ENCODE measurements at regions of chr7 and their contacts with region 1.

Region 1: GRCh38 chr7:76997381-76997780 is 34.8 kb downstream of the SPDYE17 start:
- DNase-seq: peak in 1 of 9 experiments; percentile 22
- ATAC-seq: peak; percentile 12
- H3K4me3 ChIP-seq: peak overlapping the region in 1 of 2 experiments; percentile 4
- H3K4me3 Mint-ChIP-seq: no peak overlapping the region
- H3K27ac ChIP-seq: peak overlapping the region; percentile 45 to 63
- H3K27ac Mint-ChIP-seq: no peak overlapping the region
- H3K4me1 ChIP-seq: peaks cover 22% of the 10 kb centered on the region
- H3K4me1 Mint-ChIP-seq: peaks cover 3% of the 10 kb centered on the region
- H3K27me3 ChIP-seq: no peaks in the 10 kb centered on the region
- H3K27me3 Mint-ChIP-seq: no peaks in the 10 kb centered on the region
- CTCF ChIP-seq: no peak

Region 2: DNA sequence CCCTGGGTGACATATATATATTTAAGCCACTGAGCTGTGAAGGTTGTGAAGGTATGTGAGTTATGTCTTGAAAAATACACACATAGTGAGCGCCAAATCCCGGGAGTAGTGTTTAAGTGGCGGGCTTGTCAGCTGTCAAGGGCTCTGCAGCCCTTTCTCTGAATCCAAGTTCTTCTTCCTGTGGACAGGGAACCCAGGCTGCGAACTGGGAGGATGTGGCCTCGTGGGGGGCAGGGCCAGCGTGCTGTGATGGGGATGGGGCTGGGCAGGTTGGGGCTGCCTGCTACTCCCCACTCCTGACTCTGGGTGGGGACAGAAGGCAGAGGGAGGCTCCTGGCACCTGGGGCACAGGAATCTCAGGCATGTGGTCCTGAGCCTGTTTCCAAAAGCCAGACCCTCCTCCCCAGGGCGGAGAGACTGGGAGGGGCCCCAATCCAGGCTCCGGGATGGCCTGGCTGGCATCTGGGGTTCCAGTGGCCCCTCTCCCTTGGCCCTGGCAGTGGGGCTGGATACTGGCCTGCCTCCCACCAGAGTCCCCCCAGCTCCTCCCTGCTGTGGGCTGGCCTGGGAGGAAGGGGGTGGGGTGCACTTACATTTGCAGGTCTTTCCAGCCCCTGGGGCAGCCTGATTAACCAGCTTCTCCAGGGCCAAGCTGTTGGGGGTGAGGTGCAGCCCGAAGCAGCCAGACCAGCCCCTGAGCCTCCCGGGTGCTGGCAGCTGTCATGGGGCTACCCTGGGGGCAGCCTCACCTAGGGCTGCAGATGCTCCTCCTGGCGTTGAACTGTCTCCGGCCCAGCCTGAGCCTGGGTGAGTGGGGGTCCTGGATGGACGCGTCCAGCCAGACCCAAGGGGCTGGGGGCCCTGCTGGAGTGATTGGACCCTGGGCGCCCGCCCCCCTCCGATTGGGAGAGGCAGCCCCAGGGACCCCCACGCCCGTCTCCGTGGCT is 487.2 kb before region 1 on chr7 and contains the start of gene UPK3B:
- CTCF ChIA-PET with region 1: no interaction called
- POLR2A ChIA-PET with region 1: no interaction called
- intact Hi-C with region 1: loop called in 1 of 2 experiments (anchors 10 kb)
- DNase-seq: no peak
- ATAC-seq: no peak
- H3K4me3 ChIP-seq: no peak within 1 kb of the TSS
- H3K4me3 Mint-ChIP-seq: no peak within 1 kb of the TSS
- H3K27ac ChIP-seq: no peak within 1 kb of the TSS
- H3K27ac Mint-ChIP-seq: no peak within 1 kb of the TSS
- H3K4me1 ChIP-seq: no peaks in the 10 kb centered on the region
- H3K4me1 Mint-ChIP-seq: peaks cover 2% of the 10 kb centered on the region
- H3K27me3 ChIP-seq: no peaks in the 10 kb centered on the region
- H3K27me3 Mint-ChIP-seq: no peaks in the 10 kb centered on the region
- CTCF ChIP-seq: no peak
- total RNA-seq, gene UPK3B: 1.7 to 2.4 TPM

Measured in CD8-positive, alpha-beta T cell (primary cell).